ENCODE measurements at regions of chr1 and their contacts with region 1.

Region 1: DNA sequence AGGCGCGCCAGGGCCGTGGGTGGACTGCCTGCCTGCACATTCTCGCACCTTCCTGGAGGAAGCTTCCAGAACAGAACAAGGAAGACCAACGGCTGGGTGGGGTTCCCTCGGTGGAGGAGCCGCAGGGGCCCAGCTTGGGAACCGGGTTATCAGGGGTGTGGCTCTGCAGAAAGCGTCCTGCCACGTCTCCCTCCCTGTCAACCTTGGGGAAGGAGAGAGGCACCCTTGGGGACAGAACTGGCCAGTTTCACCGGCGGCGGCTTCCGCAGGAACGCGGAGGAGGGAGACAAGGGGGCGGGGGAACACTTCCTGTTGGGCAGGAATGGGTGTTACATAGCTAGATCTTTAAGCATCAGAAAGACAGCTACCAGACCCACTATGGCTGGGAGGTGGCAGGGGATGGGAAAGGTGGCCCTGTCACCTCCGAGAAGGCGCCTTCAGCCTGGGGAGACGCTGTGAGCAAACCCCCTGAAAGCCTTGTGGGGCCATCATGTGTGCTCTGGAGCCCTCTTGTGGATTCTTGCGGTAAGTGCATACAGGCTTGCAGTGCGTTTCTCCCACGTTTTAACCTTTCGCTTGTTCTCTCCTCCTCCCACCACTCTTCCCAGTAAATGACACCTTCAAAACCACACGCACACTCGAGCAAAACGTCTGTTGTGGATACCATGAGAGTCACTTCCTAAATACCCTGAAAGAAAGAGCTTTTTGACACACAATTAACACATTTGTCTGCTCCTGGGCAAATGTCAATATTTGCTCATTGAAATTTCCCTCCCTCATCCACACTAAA is 3.8 kb upstream of the PLEKHA6 start:
- DNase-seq: peak; percentile 29
- H3K4me3 ChIP-seq: peak overlapping the region; percentile 52
- H3K27ac ChIP-seq: peak overlapping the region; percentile 47
- H3K27me3 ChIP-seq: peaks cover 18% of the 10 kb centered on the region
- CTCF ChIP-seq: peak; percentile 99

Region 2: GRCh38 chr1:204114606-204115005 is 248.9 kb before region 1 on chr1:
- CTCF ChIA-PET with region 1: no interaction called
- POLR2A ChIA-PET with region 1: no interaction called
- DNase-seq: no peak
- H3K4me3 ChIP-seq: no peak overlapping the region
- H3K27ac ChIP-seq: no peak overlapping the region
- H3K27me3 ChIP-seq: no peaks in the 10 kb centered on the region
- CTCF ChIP-seq: no peak

Region 3: DNA sequence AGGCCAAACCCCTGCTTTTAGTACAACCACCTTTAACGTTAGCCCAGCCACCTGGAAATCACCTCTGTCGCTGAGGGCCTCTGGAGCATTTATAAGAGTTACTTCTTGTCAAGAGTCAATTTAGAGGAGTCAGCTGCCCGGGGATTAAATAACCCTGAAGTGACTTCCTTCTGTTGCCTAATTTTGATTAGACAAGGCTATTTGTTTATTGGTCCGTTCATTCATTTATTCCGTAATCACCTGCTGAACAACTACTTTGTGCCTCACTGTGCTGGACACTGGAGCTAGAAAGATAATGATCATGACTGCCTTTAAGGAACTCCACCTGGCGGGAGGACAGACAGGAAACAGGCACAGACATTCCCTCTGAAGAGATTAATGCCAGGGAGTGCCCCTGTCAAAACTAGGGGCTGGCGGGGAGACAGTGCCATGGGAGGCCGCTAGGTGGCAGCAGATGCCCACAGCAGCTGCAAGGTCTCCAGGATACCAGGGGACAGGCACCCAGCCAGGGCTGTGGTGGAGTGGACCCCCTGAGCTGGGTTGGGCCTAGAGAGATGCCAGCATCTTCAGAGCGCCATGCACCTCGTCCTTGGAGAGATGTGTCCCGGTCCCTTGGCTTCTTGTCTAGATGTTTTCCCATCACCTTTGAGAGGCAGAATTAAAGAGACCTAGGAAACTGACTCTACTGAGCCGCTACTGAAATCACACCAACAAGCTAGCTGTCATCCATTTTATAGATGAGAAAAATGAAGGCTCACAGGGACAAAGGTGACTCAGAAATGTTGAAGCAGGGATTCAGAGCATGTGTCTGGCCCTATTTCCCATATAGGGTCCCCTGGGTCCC is 201.1 kb before region 1 on chr1:
- CTCF ChIA-PET with region 1: interaction called, 212 read pairs
- POLR2A ChIA-PET with region 1: no interaction called
- DNase-seq: no peak
- H3K4me3 ChIP-seq: no peak overlapping the region
- H3K27ac ChIP-seq: no peak overlapping the region
- H3K27me3 ChIP-seq: peaks cover 6% of the 10 kb centered on the region
- CTCF ChIP-seq: peak; percentile 100

Region 4: DNA sequence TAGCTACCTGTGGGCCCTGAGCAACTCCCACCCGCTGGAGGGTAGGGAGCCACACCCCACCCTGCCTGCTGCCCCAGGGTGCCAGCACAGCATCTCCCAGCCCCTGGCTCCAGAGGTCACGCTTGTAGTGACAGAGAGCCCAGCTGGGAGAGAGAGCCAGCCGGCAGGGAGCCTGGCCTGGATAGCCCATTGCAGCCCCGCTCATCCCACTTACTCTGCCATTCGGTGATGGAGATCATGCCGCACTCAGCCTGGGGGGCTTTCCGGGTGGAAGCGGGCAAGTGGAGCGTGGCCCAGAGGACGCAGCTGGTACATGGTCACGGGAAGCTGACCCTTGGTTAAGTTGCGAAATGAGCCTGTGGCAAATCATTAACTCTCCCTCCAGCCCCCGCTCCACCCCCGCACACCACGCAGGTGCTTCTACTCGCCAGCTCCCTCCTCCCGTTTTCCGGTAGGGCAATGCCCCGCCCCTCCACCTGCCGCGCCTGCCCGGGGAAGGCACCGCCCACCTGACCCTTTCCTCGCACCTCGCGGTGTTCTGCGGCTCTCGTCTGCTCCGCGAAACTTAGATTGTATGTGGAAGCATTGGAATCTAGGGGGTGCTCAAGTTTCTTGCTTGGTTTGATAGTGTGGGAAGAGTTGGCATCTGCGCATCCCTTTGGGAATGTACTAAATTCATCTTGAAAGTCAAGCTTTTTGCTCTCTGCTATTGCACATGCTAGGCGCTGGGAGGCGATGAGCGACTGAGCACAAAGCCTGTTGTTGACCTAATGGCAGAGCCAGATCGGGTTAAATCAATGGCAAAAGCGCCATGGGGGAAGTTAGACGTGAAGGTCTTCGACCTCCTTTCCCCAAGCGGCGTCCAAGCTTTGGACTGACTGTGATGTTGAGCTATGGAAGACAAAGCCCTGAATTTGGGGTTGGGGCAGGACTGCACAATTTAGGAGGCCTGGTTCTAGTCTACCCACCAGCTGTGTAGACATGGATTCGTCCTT is 149.6 kb before region 1 on chr1 and contains the start of gene GOLT1A:
- CTCF ChIA-PET with region 1: interaction called, 195 read pairs
- POLR2A ChIA-PET with region 1: interaction called, 3 read pairs
- DNase-seq: peak; percentile 65
- H3K4me3 ChIP-seq: peak within 1 kb of the TSS; percentile 31
- H3K27ac ChIP-seq: no peak within 1 kb of the TSS
- H3K27me3 ChIP-seq: peaks cover 3% of the 10 kb centered on the region
- CTCF ChIP-seq: peak; percentile 90
- polyA plus RNA-seq, gene GOLT1A: not detected in 2 replicates

Region 5: GRCh38 chr1:204257954-204258752 is 105.4 kb before region 1 on chr1:
- CTCF ChIA-PET with region 1: interaction called, 187 read pairs
- POLR2A ChIA-PET with region 1: no interaction called
- DNase-seq: peak; percentile 20
- H3K4me3 ChIP-seq: no peak overlapping the region
- H3K27ac ChIP-seq: no peak overlapping the region
- H3K27me3 ChIP-seq: no peaks in the 10 kb centered on the region
- CTCF ChIP-seq: peak; percentile 89

Region 6: DNA sequence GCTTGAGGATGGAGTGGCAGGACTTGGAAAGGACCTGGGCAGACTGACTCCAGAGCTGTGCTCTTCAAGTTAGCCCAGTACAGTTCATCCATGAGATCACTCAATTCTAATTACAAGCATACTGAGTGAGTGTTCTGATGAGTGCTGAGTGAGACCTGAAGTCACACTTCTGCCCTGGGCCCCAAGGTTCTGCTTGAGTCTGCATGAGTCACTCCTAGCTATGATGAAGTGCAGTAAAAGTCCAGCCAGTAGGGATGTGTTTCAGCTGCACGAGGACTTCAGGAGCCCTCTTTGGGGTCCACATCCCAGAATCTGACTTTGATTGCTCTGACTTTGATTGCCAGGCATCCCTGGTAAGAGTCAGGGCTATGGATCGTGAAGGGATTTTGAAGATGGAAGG is 39.6 kb before region 1 on chr1:
- CTCF ChIA-PET with region 1: interaction called, 21 read pairs
- POLR2A ChIA-PET with region 1: interaction called, 3 read pairs
- DNase-seq: no peak
- H3K4me3 ChIP-seq: no peak overlapping the region
- H3K27ac ChIP-seq: no peak overlapping the region
- H3K27me3 ChIP-seq: no peaks in the 10 kb centered on the region
- CTCF ChIP-seq: no peak

Region 7: DNA sequence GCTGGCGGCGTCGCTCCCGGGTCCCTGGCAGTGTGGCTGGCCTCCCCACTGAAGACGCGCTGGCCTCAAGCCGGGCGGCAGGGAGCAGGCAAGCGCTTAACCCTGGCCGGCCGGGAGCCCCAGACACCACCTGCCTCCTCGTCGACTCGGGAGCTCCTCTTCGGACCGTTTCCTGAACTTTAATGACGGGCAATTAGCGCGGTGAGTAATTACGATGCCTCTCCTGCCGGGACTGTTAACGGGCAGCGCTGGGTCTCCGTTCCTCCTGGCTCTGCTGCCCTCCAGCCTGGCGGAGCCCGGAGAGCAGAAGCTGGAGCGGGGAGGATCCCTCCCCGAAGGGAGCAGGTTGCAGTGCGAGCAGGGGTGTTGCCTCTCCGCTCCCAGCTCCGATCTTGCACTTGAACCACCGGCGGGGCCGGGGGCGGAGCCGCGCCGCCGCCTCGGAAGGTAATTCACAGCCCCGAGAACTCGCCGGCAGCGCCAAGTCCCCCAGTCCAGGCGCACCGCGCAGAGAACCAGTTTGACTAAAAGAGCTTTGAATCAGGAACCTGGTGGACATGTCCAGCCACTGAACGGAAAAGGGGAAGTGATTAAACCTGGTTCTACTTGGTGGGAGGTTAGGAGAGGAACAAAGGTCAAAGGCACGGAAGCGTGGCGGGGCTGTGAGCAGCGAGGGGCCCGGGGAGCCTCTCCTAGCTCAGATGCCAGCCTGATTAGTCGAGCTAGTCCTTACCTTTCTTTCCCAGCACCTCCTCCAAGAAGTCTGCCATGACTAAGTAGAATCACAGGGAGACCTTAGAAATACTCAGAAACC is 14.5 kb after region 1 on chr1:
- CTCF ChIA-PET with region 1: interaction called, 17 read pairs
- POLR2A ChIA-PET with region 1: no interaction called
- DNase-seq: no peak
- H3K4me3 ChIP-seq: peak overlapping the region; percentile 58
- H3K27ac ChIP-seq: no peak overlapping the region
- H3K27me3 ChIP-seq: peaks cover 71% of the 10 kb centered on the region
- CTCF ChIP-seq: no peak

Region 8: DNA sequence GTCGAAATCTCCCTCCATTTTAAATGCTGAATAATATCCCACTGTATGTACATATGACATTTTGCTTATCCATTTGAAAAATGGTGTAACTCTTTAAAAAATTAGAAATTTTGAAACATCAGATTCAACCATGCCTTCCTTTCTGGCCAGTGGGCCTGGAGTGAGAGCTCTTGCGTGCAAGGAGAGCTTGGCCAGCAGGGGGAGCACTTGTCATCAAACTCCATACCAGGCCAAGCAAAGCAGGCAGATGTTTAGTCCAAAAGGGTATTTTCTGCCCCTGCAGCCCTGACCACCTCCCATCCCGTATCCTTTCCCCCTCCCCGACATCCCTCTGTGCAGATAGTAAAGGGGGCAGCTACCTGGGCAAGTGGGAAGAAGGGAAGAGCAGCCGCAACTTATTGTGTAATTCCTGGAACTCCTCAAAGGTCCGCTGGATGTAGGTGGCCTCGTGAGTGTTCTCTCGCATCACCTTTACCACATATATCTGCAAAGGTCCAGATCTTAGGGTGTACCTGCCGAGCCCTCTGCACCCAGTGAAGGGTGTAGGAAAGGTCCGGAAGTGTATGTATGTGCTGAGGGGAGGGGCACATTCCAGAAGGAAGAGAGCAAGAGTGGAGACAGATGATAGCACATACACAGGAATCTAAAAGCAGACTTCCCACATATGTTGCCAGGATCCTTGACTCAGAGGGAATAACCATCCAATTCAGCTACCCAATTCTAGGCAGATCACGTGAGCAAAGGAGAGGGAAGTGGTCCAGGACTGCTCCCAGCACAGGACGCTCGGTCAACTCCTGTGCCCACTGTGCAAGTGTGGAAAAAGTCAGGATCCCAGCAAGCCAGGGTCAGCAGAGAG is 68.0 kb after region 1 on chr1:
- CTCF ChIA-PET with region 1: no interaction called
- POLR2A ChIA-PET with region 1: no interaction called
- DNase-seq: peak; percentile 65
- H3K4me3 ChIP-seq: no peak overlapping the region
- H3K27ac ChIP-seq: peak overlapping the region; percentile 39
- H3K27me3 ChIP-seq: peaks cover 2% of the 10 kb centered on the region
- CTCF ChIP-seq: peak; percentile 92

Measured in AG04450 (cell line).